ENCODE measurements at regions of chr3 and their contacts with region 1.

Region 1: GRCh38 chr3:152399374-152399773 is 130.6 kb downstream of the MBNL1 start:
- DNase-seq: no peak
- H3K4me3 ChIP-seq: no peak overlapping the region
- H3K27me3 ChIP-seq: no peaks in the 10 kb centered on the region
- CTCF ChIP-seq: no peak

Region 2: GRCh38 chr3:152382312-152383135 is 16.9 kb before region 1 on chr3:
- CTCF ChIA-PET with region 1: interaction called, 3 read pairs
- POLR2A ChIA-PET with region 1: interaction called, 14 read pairs
- DNase-seq: no peak
- H3K4me3 ChIP-seq: peak overlapping the region; percentile 17; the same call in 1 of the 2 replicates
- H3K27me3 ChIP-seq: no peaks in the 10 kb centered on the region
- CTCF ChIP-seq: no peak

Measured in BJ (cell line).